GM13977 (cell line): ENCODE measurements at regions of chr1 and their contacts with region 1.

Region 1: GRCh38 chr1:184982002-184982954 is 8.0 kb upstream of the NIBAN1 start:
- DNase-seq: peak; percentile 64
- CTCF ChIP-seq: peak; percentile 89

Region 2: DNA sequence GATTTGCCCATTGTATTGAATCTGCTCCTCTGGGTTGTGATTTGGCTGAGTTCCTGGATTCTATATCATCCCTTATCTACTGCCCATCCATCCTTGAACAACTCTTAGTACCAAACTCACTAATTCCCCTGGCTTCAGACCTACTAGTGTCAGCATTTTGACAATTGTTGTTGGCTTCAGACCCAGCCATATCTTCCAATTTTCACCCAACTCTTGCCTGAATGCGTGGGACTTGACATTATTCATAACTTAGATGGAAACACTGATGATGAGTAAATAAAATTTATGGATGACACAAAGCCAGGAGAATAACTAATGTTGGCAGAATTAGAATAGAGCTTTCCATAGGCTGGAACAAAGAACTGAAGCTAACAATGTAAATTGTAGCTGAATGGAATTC is 200.3 kb before region 1 on chr1:
- in situ Hi-C with region 1: no loop called
- DNase-seq: no peak
- CTCF ChIP-seq: no peak

Region 3: GRCh38 chr1:185670187-185670627 is 687.9 kb after region 1 on chr1:
- in situ Hi-C with region 1: loop called (anchors 25 kb)
- DNase-seq: no peak
- CTCF ChIP-seq: peak; percentile 44